HCT116 (cell line): ENCODE measurements at regions of chr15 and their contacts with region 1.

Region 1: GRCh38 chr15:74873036-74873755 is at the start of gene SCAMP2:
- DNase-seq: peak; percentile 91
- ATAC-seq: peak; percentile 98
- H3K4me3 ChIP-seq: peak within 1 kb of the TSS; percentile 84 to 89
- H3K27ac ChIP-seq: peak within 1 kb of the TSS; percentile 71
- H3K4me1 ChIP-seq: peaks cover 0 to 26% of the 10 kb centered on the region in 2 experiments; a peak in 2 of 4 replicates
- H3K27me3 ChIP-seq: no peaks in the 10 kb centered on the region
- CTCF ChIP-seq: no peak
- POLR2A ChIP-seq: peak; percentile 74
- RAD21 ChIP-seq: no peak
- total RNA-seq, gene SCAMP2: 55.8 TPM

Region 2: GRCh38 chr15:74842581-74843444 is 30.4 kb before region 1 on chr15 and contains the start of gene ULK3:
- CTCF ChIA-PET with region 1: no interaction called
- POLR2A ChIA-PET with region 1: no interaction called
- RAD21 ChIA-PET with region 1: no interaction called
- intact Hi-C with region 1: loop called (anchors 2 kb)
- DNase-seq: peak; percentile 61
- ATAC-seq: peak; percentile 91
- H3K4me3 ChIP-seq: peak within 1 kb of the TSS; percentile 53 to 78
- H3K27ac ChIP-seq: peak within 1 kb of the TSS; percentile 93
- H3K4me1 ChIP-seq: peaks cover 9 to 21% of the 10 kb centered on the region in 2 experiments; a peak in 3 of 4 replicates
- H3K27me3 ChIP-seq: no peaks in the 10 kb centered on the region
- CTCF ChIP-seq: peak in 2 of 3 experiments; percentile 18 to 45; a peak in 2 of 6 replicates
- POLR2A ChIP-seq: peak; percentile 55
- RAD21 ChIP-seq: peak; percentile 41; the same call in 1 of the 2 replicates
- total RNA-seq, gene ULK3: 48.4 TPM